Activated T-helper 1 cell treated with anti-CD3 and anti-CD28 coated beads, Interleukin-12 subunit alpha, Interleukin-12 subunit beta, Interleukin-2, Interleukin-4 antibody, amounts not matched to agents 30 ng/mL and 10 ng/mL and 1 ng/mL, durations not matched to agents 14 hours and 24 hours and 36 hours (primary cell): ENCODE measurements at regions of chr16 and their contacts with region 1.

Region 1: DNA sequence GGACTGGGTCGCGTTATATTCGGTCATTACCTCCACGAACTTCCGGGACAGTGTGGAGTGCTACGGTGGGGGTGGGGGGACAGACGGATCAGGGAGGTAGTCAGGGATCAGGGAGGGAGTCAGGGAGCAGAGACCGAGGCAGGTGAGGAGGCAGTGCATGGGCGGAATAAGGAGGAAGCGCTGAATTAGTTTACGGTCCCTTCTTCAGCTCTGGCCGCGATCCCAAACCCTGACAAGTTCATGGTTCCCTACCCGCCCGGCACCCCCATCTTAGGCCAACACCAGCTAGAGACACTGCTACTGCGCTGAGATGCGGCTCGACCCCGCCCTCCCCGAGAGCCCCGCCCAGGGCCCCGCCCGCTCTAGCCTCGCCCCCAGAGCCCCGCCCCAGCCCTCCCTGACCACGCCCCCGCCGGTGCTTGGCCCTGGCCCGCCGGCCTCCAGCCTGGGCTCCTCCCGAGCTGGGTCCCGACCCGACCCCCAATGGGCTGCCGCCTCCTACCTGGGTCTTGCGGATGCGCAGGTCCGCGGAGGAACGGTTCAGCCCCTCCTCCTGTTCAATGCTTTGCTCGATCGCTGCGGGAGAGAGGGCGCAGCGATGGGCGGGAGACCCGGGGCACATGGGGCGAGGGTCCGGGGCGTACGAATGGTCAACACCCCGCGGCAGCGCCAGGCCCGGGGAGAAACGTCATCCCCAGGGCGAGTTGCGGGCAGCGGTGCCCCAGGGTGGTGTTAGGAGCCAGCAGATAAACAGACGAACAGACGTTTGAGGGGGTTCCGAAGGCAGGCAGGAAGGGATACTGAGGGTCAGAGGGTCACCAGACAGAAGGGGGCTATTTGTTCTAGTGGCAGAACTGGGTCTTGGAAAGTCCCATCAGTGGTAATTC is 12.2 kb downstream of the HSD3B7 start:
- DNase-seq: peak; percentile 66
- H3K4me3 Mint-ChIP-seq: peak overlapping the region; percentile 74
- H3K27ac Mint-ChIP-seq: peak overlapping the region; percentile 44
- H3K4me1 Mint-ChIP-seq: peaks cover 11% of the 10 kb centered on the region
- H3K27me3 Mint-ChIP-seq: peaks cover 18% of the 10 kb centered on the region

Region 2: GRCh38 chr16:30984669-30985400 is 12.4 kb before region 1 on chr16 and contains the start of gene HSD3B7:
- intact Hi-C with region 1: loop called (anchors 1 kb)
- DNase-seq: peak; percentile 73
- H3K4me3 Mint-ChIP-seq: peak within 1 kb of the TSS; percentile 7
- H3K27ac Mint-ChIP-seq: no peak within 1 kb of the TSS
- H3K4me1 Mint-ChIP-seq: no peaks in the 10 kb centered on the region
- H3K27me3 Mint-ChIP-seq: no peaks in the 10 kb centered on the region
- total RNA-seq, gene HSD3B7: 2.1 and 3.3 TPM in 2 replicates

Region 3: DNA sequence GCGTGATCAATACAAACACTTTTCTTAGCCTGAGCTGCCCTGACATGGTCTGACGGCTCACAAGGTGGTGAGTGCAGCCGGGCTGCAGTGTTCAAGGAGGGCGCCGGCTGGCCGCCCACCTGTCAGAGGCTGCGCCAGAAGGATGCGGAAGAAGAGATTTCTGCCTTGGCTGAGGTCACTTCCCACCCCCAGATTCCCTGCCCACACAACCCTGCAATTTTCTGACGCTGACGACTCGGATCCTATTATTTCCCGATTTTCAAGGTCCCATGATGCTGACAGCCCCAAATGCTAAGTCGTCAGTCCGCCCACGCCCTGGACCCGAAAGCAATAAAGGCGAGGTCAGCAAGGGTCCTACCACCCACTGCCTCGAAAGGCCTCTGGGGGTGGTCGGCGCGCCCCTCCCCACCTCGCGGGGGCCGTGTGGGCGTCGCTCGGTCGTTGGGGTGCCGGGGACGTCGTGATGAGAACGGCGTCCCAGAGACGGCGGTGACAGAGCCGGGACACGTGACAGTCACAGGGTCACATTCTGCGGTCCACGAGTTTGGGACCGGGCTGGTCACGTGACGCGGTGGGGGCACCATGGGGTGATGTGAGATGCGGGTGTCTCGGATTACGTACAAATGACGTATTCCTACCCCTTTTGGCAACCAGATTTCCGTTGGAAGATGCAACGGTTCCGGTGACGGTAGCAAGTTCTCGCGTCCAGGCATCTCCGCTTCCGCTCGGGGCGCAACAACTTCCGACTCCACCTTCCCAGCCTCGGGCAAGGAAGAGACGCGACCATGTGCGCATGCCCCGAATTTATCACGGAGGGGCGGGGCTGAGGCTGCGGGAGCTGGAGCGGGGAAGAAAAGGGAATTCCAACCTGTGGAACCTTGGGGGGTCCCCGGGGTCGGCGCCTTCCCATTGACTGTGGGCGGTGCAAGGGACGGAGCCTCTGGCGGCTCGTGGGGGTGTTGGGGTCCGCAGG is 35.8 kb after region 1 on chr16 and contains the start of gene STX4:
- intact Hi-C with region 1: loop called (anchors 1 kb)
- DNase-seq: peak; percentile 97
- H3K4me3 Mint-ChIP-seq: peak within 1 kb of the TSS; percentile 95
- H3K27ac Mint-ChIP-seq: peak within 1 kb of the TSS; percentile 92
- H3K4me1 Mint-ChIP-seq: peaks cover 24% of the 10 kb centered on the region
- H3K27me3 Mint-ChIP-seq: no peaks in the 10 kb centered on the region
- total RNA-seq, gene STX4: 56.4 and 58.7 TPM in 2 replicates

Region 4: GRCh38 chr16:31117391-31118197 is 120.4 kb after region 1 on chr16 and contains the start of gene KAT8:
- intact Hi-C with region 1: loop called (anchors 5 kb)
- DNase-seq: peak; percentile 95
- H3K4me3 Mint-ChIP-seq: peak within 1 kb of the TSS; percentile 88
- H3K27ac Mint-ChIP-seq: peak within 1 kb of the TSS; percentile 92
- H3K4me1 Mint-ChIP-seq: peaks cover 19% of the 10 kb centered on the region
- H3K27me3 Mint-ChIP-seq: no peaks in the 10 kb centered on the region
- total RNA-seq, gene KAT8: 55.4 and 58.2 TPM in 2 replicates